ENCODE measurements at regions of chrX and their contacts with region 1.

Region 1: GRCh38 chrX:100674705-100675104 is 30.7 kb downstream of the SRPX2 start:
- DNase-seq: no peak
- H3K4me3 ChIP-seq: no peak overlapping the region
- H3K27ac ChIP-seq: no peak overlapping the region
- H3K27me3 ChIP-seq: no peaks in the 10 kb centered on the region
- CTCF ChIP-seq: no peak

Region 2: GRCh38 chrX:100449696-100450608 is 224.8 kb before region 1 on chrX:
- CTCF ChIA-PET with region 1: no interaction called
- POLR2A ChIA-PET with region 1: no interaction called
- DNase-seq: no peak
- H3K4me3 ChIP-seq: no peak overlapping the region
- H3K27ac ChIP-seq: no peak overlapping the region
- H3K27me3 ChIP-seq: no peaks in the 10 kb centered on the region
- CTCF ChIP-seq: no peak

Region 3: DNA sequence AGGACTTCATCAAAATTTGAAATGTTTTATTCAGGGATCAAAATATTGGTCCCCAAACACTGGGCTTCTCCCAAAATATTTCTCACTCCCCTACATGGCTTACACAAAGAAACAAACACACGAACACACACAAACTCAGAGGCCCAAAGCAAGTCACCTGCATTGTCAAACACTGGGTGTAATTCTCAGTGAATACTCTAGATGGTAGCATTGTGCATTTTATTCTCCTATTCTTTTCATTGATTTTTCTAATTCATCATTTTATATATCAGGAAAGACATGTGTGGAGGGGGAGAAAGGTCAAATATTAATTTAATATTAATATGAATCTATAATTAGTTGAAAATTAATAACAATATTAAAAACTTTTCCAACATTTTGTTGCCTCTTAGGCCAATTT is 162.2 kb before region 1 on chrX:
- CTCF ChIA-PET with region 1: interaction called, 15 read pairs
- POLR2A ChIA-PET with region 1: no interaction called
- DNase-seq: no peak
- H3K4me3 ChIP-seq: no peak overlapping the region
- H3K27ac ChIP-seq: no peak overlapping the region
- H3K27me3 ChIP-seq: no peaks in the 10 kb centered on the region
- CTCF ChIP-seq: peak; percentile 49

Region 4: GRCh38 chrX:100615005-100615404 is 59.7 kb before region 1 on chrX:
- CTCF ChIA-PET with region 1: interaction called, 21 read pairs
- POLR2A ChIA-PET with region 1: no interaction called
- DNase-seq: peak; percentile 10
- H3K4me3 ChIP-seq: no peak overlapping the region
- H3K27ac ChIP-seq: no peak overlapping the region
- H3K27me3 ChIP-seq: peaks cover 2% of the 10 kb centered on the region
- CTCF ChIP-seq: peak; percentile 69

Region 5: GRCh38 chrX:100636321-100636991 is 38.2 kb before region 1 on chrX and contains the start of gene TSPAN6:
- CTCF ChIA-PET with region 1: interaction called, 49 read pairs
- POLR2A ChIA-PET with region 1: interaction called, 3 read pairs
- DNase-seq: peak; percentile 57
- H3K4me3 ChIP-seq: peak within 1 kb of the TSS; percentile 70
- H3K27ac ChIP-seq: no peak within 1 kb of the TSS
- H3K27me3 ChIP-seq: no peaks in the 10 kb centered on the region
- CTCF ChIP-seq: peak; percentile 60
- polyA plus RNA-seq, gene TSPAN6: 38.4 and 49.1 TPM in 2 replicates

Region 6: GRCh38 chrX:100649550-100650356 is 25.0 kb before region 1 on chrX:
- CTCF ChIA-PET with region 1: interaction called, 23 read pairs
- POLR2A ChIA-PET with region 1: interaction called, 4 read pairs
- DNase-seq: peak; percentile 78
- H3K4me3 ChIP-seq: peak overlapping the region; percentile 10; the same call in 1 of the 2 replicates
- H3K27ac ChIP-seq: peak overlapping the region; percentile 94
- H3K27me3 ChIP-seq: no peaks in the 10 kb centered on the region
- CTCF ChIP-seq: no peak

Region 7: DNA sequence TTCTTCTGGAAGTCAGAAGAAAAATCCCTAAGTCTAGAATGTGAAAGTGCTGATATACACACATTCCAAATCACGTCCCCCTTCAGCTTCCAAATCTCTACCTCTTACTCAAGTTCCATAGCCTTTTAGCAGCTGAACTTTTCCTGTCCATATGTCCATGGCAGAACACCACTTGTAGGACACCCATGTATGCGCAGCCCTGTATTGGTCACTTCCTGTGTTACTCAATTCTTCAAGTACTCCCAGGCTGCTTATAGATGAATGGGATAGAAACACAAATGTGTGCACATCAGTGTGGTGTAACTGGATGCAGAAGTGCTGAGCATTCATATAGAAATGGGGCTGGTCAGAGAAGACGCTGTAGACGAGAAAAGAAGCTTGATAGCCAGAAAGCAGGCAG is 11.9 kb before region 1 on chrX:
- CTCF ChIA-PET with region 1: interaction called, 15 read pairs
- POLR2A ChIA-PET with region 1: no interaction called
- DNase-seq: no peak
- H3K4me3 ChIP-seq: no peak overlapping the region
- H3K27ac ChIP-seq: no peak overlapping the region
- H3K27me3 ChIP-seq: no peaks in the 10 kb centered on the region
- CTCF ChIP-seq: no peak

Region 8: GRCh38 chrX:100685284-100685996 is 10.7 kb after region 1 on chrX:
- CTCF ChIA-PET with region 1: interaction called, 30 read pairs
- POLR2A ChIA-PET with region 1: interaction called, 3 read pairs
- DNase-seq: peak; percentile 37
- H3K4me3 ChIP-seq: no peak overlapping the region
- H3K27ac ChIP-seq: no peak overlapping the region
- H3K27me3 ChIP-seq: no peaks in the 10 kb centered on the region
- CTCF ChIP-seq: peak; percentile 83